GM18951 (cell line): ENCODE measurements at regions of chr4 and their contacts with region 1.

Region 1: DNA sequence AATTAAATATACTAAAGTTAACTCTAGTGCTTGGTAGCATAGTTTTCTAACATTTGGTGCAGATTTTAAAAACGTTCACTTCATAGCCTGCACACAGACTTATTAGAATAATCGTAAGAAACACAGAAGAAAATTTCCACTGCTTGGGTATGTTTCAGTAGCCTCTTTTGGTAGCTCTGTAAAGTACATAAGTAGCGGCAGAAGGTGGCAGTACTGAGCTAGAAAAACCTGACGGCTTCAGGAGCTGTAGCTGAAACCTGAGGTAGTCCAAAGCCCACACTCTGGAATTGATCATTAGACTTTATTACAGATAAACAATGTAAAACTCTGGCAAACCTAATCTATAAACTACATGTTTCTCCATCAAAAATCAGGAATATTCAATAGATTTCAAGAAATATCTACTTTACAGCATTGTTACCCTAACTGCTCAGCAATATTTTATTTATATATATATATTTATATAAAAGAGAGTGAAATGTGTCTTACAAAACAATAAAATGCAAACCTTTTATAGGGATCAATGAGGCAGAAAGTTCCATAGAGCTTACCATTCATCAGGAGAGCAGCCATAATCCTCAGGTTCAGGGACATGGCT is 88.2 kb downstream of the ATP8A1 start:
- POLR2A ChIP-seq: no peak

Region 2: DNA sequence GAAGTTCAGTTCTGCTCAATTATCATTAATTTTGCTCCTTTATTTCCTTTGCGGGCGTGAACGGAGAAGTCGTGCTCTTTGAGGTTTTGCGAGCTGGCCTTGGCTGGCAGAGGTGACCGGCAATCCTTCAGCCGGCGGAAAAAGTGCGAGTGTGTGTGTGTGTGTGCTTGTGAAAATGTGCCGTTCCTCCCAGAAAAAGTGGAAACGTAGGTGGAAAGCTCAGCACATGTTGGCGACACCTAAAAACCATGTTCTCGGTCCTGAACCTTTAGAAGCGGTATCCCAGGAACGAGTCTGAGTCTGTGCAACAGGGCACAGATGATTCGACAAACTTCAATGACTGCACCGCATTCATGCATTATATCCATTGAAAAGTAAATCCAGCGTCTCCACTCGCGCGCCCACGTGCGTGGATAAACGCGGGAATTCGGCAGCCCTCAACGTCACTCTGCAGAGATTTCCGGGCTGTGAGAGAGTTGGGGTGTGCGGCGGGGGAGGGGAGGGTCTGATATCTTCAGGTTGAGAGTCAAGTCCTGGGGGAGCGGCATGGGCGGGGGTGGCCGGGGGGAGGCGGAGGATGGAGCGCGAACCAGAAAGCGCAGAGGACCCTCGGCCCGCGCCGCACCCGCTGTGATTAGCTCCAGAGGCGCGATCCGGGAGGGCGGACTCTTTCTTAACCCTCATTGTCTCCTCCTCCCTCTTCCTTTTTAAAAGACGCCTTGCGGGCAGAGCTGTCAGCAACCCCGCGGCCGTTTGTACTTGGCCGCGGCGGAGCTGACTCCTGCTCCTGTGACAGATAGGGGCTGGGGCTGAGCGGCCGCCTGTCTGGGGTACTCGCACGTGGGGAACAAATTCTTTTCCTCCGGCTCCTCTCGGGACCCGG is 171.7 kb before region 1 on chr4 and contains the start of gene SHISA3:
- in situ Hi-C with region 1: no loop called
- POLR2A ChIP-seq: no peak

Region 3: GRCh38 chr4:42673082-42673425 is 104.3 kb after region 1 on chr4:
- in situ Hi-C with region 1: no loop called
- POLR2A ChIP-seq: no peak

Region 4: DNA sequence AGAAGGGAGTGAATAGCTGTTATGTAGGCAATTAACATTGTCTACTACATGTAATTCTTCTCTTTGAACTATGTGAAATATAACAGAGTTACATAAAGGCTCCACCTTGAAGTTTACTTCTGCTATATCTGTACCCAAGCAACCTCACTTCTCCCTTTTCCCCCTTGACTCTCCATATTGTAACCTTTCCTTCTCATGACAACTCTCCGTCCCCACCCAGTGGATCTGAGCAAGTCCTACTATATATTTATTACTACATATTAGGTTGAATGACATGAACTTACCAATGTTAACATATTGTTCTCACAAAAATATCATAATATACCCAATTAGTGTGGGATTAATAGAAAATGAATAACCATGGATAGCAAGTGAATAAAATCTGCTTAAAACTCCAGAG is 181.4 kb after region 1 on chr4:
- in situ Hi-C with region 1: loop called (anchors 10 kb)
- POLR2A ChIP-seq: no peak

Region 5: GRCh38 chr4:42865572-42866189 is 297.0 kb after region 1 on chr4:
- in situ Hi-C with region 1: loop called (anchors 25 kb)
- POLR2A ChIP-seq: no peak